ENCODE measurements at regions of chr12 and their contacts with region 1.

Region 1: GRCh38 chr12:7638760-7639555 is 26.8 kb downstream of the APOBEC1 start:
- DNase-seq: peak; percentile 84
- ATAC-seq: peak; percentile 87
- H3K4me3 Mint-ChIP-seq: peak overlapping the region; percentile 57
- H3K27ac Mint-ChIP-seq: peak overlapping the region; percentile 86
- H3K4me1 Mint-ChIP-seq: peaks cover 23% of the 10 kb centered on the region
- H3K27me3 Mint-ChIP-seq: peaks cover 6% of the 10 kb centered on the region

Region 2: GRCh38 chr12:7142056-7142644 is 496.8 kb before region 1 on chr12:
- CTCF ChIA-PET with region 1: no interaction called
- POLR2A ChIA-PET with region 1: no interaction called
- intact Hi-C with region 1: loop called (anchors 1 to 5 kb)
- DNase-seq: peak; percentile 74
- ATAC-seq: peak; percentile 93
- H3K4me3 Mint-ChIP-seq: no peak overlapping the region
- H3K27ac Mint-ChIP-seq: no peak overlapping the region
- H3K4me1 Mint-ChIP-seq: no peaks in the 10 kb centered on the region
- H3K27me3 Mint-ChIP-seq: no peaks in the 10 kb centered on the region

Region 3: DNA sequence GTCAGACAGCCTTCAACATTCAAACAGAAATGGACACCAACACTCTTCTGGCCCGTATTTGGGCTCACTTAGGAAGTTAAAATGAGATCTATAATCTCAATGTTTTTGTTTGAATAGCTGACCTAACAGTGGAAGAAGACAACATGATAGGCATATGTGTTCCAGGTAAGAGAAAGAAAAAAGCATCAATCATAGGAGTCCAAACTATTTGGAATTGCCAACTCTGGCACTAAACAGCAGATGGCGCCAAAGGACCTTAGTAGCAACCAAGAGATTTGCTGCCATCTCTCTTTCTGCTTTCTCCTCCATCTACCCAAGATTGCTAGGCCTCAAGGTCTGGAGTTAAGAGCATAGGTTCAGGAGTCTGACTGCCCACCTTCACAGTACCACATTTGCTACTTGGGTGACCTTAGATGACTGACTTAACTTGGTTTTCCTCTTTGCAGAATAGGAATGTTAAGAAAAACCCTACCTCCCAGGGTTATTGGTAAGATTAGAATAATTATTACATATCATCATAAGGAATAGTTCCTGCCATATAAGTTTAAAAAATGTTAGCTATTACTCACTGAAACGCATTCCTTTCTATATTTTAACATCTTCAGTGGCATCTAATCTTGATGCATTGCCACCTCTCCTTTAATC is 419.2 kb before region 1 on chr12:
- CTCF ChIA-PET with region 1: interaction called, 10 read pairs
- POLR2A ChIA-PET with region 1: no interaction called
- intact Hi-C with region 1: loop called (anchors 1 kb)
- DNase-seq: peak; percentile 85
- ATAC-seq: peak; percentile 66
- H3K4me3 Mint-ChIP-seq: no peak overlapping the region
- H3K27ac Mint-ChIP-seq: no peak overlapping the region
- H3K4me1 Mint-ChIP-seq: no peaks in the 10 kb centered on the region
- H3K27me3 Mint-ChIP-seq: no peaks in the 10 kb centered on the region

Region 4: DNA sequence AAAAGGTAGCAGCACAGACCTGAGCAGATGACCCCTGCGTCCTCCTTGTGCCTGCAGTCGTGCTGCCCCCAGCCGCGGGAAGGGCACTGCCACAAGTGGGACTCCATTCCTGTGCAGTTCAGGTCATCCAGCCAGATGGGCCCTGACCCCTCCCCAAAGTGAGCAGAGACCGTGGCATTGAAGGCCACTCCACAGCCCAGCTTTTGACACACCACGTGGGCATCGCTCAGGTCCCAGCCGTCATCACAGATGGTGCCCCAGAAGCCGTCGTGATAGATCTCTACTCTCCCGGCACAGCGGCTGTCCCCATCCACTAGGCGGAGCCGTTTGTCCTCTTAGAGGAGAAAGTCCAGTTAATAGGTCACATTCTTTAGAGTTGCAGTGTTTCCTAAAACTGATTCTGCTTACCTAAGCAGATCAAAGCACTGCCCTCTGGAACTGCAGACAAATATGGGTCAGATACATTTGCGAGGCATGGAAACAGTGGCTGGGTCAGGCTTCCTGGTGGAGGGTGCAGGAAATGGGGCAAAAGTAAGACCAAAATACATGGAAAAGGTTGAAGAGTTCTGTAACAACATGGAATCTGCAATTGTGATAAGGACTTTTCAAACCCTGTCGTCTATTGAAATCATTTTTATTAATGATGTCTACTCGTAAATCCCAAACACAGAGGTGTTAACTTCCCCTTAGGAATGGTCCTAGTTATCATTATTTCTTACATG is 264.4 kb before region 1 on chr12:
- CTCF ChIA-PET with region 1: interaction called, 3 read pairs
- POLR2A ChIA-PET with region 1: no interaction called
- intact Hi-C with region 1: loop called in 1 of 2 experiments (anchors 1 kb)
- DNase-seq: peak; percentile 59
- ATAC-seq: no peak
- H3K4me3 Mint-ChIP-seq: no peak overlapping the region
- H3K27ac Mint-ChIP-seq: no peak overlapping the region
- H3K4me1 Mint-ChIP-seq: no peaks in the 10 kb centered on the region
- H3K27me3 Mint-ChIP-seq: peaks cover 16% of the 10 kb centered on the region

Region 5: GRCh38 chr12:7460375-7461259 is 178.3 kb before region 1 on chr12:
- CTCF ChIA-PET with region 1: interaction called, 4 read pairs
- POLR2A ChIA-PET with region 1: no interaction called
- intact Hi-C with region 1: loop called (anchors 1 kb)
- DNase-seq: peak; percentile 71
- ATAC-seq: peak; percentile 79
- H3K4me3 Mint-ChIP-seq: no peak overlapping the region
- H3K27ac Mint-ChIP-seq: no peak overlapping the region
- H3K4me1 Mint-ChIP-seq: no peaks in the 10 kb centered on the region
- H3K27me3 Mint-ChIP-seq: peaks cover 3% of the 10 kb centered on the region

Region 6: DNA sequence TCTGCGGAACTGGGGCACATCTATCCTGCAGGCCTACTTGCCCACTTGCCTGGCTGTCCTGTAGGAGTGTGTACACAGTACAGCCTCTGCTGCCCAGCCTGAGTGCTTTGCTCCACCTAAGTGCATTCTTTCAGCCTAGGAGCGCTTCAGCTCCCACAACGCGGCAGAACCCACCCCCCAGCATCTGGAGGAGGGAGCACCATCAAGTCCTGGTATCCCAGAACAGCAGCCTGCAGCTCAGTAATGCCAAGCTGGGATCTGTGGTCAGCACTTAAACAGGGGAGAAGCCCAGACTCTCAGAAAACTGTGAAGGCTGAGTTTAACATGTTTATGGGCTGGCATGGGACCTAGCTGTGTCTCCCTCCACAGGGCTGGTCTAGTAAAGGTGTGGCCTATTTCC is 55.4 kb before region 1 on chr12:
- CTCF ChIA-PET with region 1: interaction called, 9 read pairs
- POLR2A ChIA-PET with region 1: no interaction called
- intact Hi-C with region 1: loop called (anchors 1 kb)
- DNase-seq: no peak
- ATAC-seq: no peak
- H3K4me3 Mint-ChIP-seq: no peak overlapping the region
- H3K27ac Mint-ChIP-seq: no peak overlapping the region
- H3K4me1 Mint-ChIP-seq: peaks cover 6% of the 10 kb centered on the region
- H3K27me3 Mint-ChIP-seq: peaks cover 20% of the 10 kb centered on the region

Region 7: DNA sequence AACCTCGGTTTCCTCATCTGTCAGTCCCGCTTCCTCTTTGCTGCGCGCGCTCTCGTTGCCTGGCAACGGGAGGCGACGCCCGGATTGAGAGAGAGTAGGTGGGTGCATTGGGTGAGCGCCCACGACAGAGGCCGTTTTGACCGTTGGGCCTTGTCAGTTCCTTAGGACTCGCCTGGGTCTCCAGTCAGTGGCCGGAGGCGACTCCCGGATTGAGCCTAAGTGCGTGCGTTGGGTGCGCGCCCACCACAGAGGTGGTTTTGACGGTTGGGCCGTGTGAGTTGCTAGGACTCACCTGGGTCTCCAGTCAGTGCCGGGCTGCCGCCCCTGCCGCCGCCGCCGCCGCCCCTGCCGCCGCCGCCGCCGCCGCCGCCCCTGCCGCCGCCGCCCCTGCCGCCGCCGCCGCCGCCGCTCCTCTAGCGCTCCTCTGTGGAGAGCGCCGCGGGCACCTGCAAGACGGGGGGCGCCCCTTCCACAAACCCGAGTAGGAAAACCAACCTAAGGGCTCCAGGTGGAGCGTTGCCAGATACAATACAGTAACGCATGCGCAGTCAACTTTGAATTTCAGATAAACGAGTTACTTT is 10.5 kb before region 1 on chr12:
- CTCF ChIA-PET with region 1: interaction called, 11 read pairs
- POLR2A ChIA-PET with region 1: no interaction called
- intact Hi-C with region 1: no loop called
- DNase-seq: peak; percentile 10
- ATAC-seq: no peak
- H3K4me3 Mint-ChIP-seq: no peak overlapping the region
- H3K27ac Mint-ChIP-seq: no peak overlapping the region
- H3K4me1 Mint-ChIP-seq: no peaks in the 10 kb centered on the region
- H3K27me3 Mint-ChIP-seq: peaks cover 10% of the 10 kb centered on the region

Region 8: GRCh38 chr12:7784701-7785100 is 145.7 kb after region 1 on chr12:
- CTCF ChIA-PET with region 1: no interaction called
- POLR2A ChIA-PET with region 1: no interaction called
- intact Hi-C with region 1: no loop called
- DNase-seq: no peak
- ATAC-seq: no peak
- H3K4me3 Mint-ChIP-seq: no peak overlapping the region
- H3K27ac Mint-ChIP-seq: no peak overlapping the region
- H3K4me1 Mint-ChIP-seq: no peaks in the 10 kb centered on the region
- H3K27me3 Mint-ChIP-seq: peaks cover 5% of the 10 kb centered on the region